ENCODE measurements at regions of chr11 and their contacts with region 1.

Region 1: GRCh38 chr11:108117746-108118371 is 3.5 kb upstream of the ACAT1 start:
- DNase-seq: no peak

Region 2: DNA sequence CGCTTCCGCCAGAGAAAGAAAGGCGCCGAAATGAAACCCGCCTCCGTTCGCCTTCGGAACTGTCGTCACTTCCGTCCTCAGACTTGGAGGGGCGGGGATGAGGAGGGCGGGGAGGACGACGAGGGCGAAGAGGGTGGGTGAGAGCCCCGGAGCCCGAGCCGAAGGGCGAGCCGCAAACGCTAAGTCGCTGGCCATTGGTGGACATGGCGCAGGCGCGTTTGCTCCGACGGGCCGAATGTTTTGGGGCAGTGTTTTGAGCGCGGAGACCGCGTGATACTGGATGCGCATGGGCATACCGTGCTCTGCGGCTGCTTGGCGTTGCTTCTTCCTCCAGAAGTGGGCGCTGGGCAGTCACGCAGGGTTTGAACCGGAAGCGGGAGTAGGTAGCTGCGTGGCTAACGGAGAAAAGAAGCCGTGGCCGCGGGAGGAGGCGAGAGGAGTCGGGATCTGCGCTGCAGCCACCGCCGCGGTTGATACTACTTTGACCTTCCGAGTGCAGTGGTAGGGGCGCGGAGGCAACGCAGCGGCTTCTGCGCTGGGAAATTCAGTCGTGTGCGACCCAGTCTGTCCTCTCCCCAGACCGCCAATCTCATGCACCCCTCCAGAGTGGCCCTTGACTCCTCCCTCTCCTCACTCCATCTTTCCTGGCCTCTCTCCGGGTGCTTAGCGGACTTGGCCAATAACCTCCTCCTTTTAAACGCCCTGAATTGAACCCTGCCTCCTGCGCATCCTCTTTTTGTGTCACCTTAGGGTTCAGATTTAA is 105.0 kb after region 1 on chr11 and contains the start of gene ATM:
- intact Hi-C with region 1: loop called in 1 of 2 experiments (anchors 5 kb)
- DNase-seq: peak; percentile 100
- total RNA-seq, gene ATM: 60.5 to 77.7 TPM